Activated CD4-positive, alpha-beta memory T cell treated with anti-CD3 and anti-CD28 coated beads for 36 hours (primary cell): ENCODE measurements at regions of chr10 and their contacts with region 1.

Region 1: GRCh38 chr10:121823993-121824463 is 103.8 kb downstream of the ATE1 start:
- DNase-seq: no peak
- H3K4me3 Mint-ChIP-seq: no peak overlapping the region
- H3K27ac Mint-ChIP-seq: no peak overlapping the region
- H3K4me1 Mint-ChIP-seq: peaks cover 8% of the 10 kb centered on the region
- H3K27me3 Mint-ChIP-seq: no peaks in the 10 kb centered on the region

Region 2: GRCh38 chr10:121598207-121598862 is 225.7 kb before region 1 on chr10 and contains the start of gene FGFR2:
- CTCF ChIA-PET with region 1: no interaction called
- POLR2A ChIA-PET with region 1: no interaction called
- intact Hi-C with region 1: no loop called
- DNase-seq: peak; percentile 38
- H3K4me3 Mint-ChIP-seq: no peak within 1 kb of the TSS
- H3K27ac Mint-ChIP-seq: no peak within 1 kb of the TSS
- H3K4me1 Mint-ChIP-seq: peaks cover 3% of the 10 kb centered on the region
- H3K27me3 Mint-ChIP-seq: peaks cover 48% of the 10 kb centered on the region
- total RNA-seq, gene FGFR2: 0.05 to 0.19 TPM

Region 3: GRCh38 chr10:121845044-121845784 is 21.2 kb after region 1 on chr10:
- CTCF ChIA-PET with region 1: interaction called, 9 read pairs
- POLR2A ChIA-PET with region 1: no interaction called
- intact Hi-C with region 1: loop called (anchors 1 kb)
- DNase-seq: peak; percentile 39
- H3K4me3 Mint-ChIP-seq: no peak overlapping the region
- H3K27ac Mint-ChIP-seq: no peak overlapping the region
- H3K4me1 Mint-ChIP-seq: peaks cover 14% of the 10 kb centered on the region
- H3K27me3 Mint-ChIP-seq: no peaks in the 10 kb centered on the region

Region 4: DNA sequence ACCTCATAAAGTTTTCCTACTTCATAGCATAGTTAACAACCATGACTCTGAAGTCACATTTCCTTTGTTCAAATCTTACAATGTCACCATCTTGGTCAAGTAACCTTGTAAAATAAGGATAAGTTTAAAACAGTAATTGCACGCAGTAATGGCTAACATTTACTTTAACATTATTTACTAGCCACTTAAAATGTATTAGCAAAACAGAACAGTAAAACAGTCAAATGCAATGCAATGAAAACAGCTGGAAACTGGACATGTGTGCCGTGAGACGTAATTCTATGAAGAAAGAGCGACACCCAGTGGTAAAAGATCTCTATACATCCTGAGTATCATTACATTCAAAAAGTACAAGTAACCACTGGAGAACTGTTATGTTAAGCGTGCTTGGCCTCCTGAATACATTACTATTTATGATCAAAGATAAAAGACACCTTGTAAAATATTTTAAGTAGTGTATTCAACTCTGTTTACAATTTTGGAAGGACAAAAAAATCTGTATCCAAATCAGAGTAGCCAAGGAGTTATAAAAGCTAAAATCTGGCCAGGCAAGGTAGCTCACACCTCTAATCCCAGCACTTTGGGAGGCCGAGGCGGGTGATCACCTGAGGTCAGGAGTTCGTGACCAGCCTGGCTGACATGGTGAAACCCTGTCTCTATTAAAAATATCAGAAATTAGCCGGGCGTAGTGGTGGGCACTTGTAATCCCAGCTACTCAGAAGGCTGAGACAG is 76.6 kb after region 1 on chr10:
- CTCF ChIA-PET with region 1: interaction called, 10 read pairs
- POLR2A ChIA-PET with region 1: interaction called, 4 read pairs
- intact Hi-C with region 1: loop called (anchors 1 kb)
- DNase-seq: no peak
- H3K4me3 Mint-ChIP-seq: no peak overlapping the region
- H3K27ac Mint-ChIP-seq: no peak overlapping the region
- H3K4me1 Mint-ChIP-seq: no peaks in the 10 kb centered on the region
- H3K27me3 Mint-ChIP-seq: no peaks in the 10 kb centered on the region

Region 5: GRCh38 chr10:122980209-122981065 is 1156.4 kb after region 1 on chr10 and contains the start of gene PSTK:
- CTCF ChIA-PET with region 1: no interaction called
- POLR2A ChIA-PET with region 1: no interaction called
- intact Hi-C with region 1: no loop called
- DNase-seq: peak; percentile 91
- H3K4me3 Mint-ChIP-seq: peak within 1 kb of the TSS; percentile 82
- H3K27ac Mint-ChIP-seq: peak within 1 kb of the TSS; percentile 94
- H3K4me1 Mint-ChIP-seq: peaks cover 16% of the 10 kb centered on the region
- H3K27me3 Mint-ChIP-seq: no peaks in the 10 kb centered on the region
- total RNA-seq, gene PSTK: 3.2 to 3.4 TPM